B cell (primary cell): ENCODE measurements at regions of chr9 and their contacts with region 1.

Region 1: DNA sequence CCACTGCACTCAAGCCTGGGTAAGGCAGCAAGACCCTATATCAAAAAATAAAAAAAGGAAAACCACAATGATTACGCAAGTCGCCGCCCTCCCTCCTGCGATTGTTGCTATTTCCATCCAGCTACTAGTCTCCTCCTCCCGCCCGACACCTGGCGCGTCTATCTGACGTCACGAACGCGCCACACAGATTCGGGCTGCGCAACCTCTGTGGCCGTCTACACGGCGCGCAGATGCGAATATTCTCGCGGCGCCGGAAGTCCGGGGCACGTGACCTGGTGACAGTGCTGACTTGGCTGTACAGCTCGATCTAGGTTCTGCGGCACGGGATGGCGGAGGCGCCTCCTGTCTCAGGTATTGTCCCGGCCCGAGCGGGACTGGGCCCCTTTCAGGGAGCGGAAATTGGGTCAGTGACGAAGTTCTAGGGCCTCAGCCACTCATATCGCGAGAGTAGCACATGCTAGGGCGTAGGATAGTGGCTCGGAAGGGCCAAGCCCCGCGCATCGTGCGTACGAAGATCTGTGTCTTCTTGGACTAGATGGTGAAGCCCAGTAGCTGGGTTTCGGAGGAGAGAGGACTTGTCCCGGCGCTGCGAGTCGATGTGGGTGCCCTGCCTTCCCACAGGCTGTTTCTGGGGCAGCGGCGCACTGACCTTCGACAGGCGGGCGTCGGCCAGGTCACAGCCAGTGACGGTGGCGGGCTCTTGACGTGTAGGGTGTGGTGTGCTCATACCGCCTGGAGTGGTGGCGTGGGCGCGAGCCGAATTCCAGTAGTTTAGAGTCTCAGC is at the start of gene NFX1:
- DNase-seq: peak; percentile 100
- ATAC-seq: peak; percentile 82
- H3K4me3 ChIP-seq: peak within 1 kb of the TSS; percentile 80 to 98 (median 86)
- H3K4me3 Mint-ChIP-seq: peak within 1 kb of the TSS; percentile 99
- H3K27ac ChIP-seq: peak within 1 kb of the TSS; percentile 99 to 100
- H3K27ac Mint-ChIP-seq: peak within 1 kb of the TSS; percentile 100
- H3K4me1 ChIP-seq: peaks cover 43 to 58% of the 10 kb centered on the region in 2 donors
- H3K4me1 Mint-ChIP-seq: peaks cover 62% of the 10 kb centered on the region
- H3K27me3 ChIP-seq: no peaks in the 10 kb centered on the region
- H3K27me3 Mint-ChIP-seq: no peaks in the 10 kb centered on the region
- CTCF ChIP-seq: no peak
- total RNA-seq, gene NFX1: 76.3 and 81.5 TPM in 2 replicates

Region 2: GRCh38 chr9:33076358-33077004 is 214.0 kb before region 1 on chr9 and contains the start of gene SMU1:
- CTCF ChIA-PET with region 1: interaction called, 3 read pairs
- POLR2A ChIA-PET with region 1: interaction called, 3 read pairs
- intact Hi-C with region 1: loop called (anchors 10 kb)
- DNase-seq: peak; percentile 97
- ATAC-seq: peak; percentile 98
- H3K4me3 ChIP-seq: peak within 1 kb of the TSS; percentile 72 to 87 (median 84)
- H3K4me3 Mint-ChIP-seq: peak within 1 kb of the TSS; percentile 97
- H3K27ac ChIP-seq: peak within 1 kb of the TSS; percentile 91 to 95
- H3K27ac Mint-ChIP-seq: peak within 1 kb of the TSS; percentile 98
- H3K4me1 ChIP-seq: peaks cover 17 to 29% of the 10 kb centered on the region in 2 donors
- H3K4me1 Mint-ChIP-seq: peaks cover 34% of the 10 kb centered on the region
- H3K27me3 ChIP-seq: no peaks in the 10 kb centered on the region
- H3K27me3 Mint-ChIP-seq: no peaks in the 10 kb centered on the region
- CTCF ChIP-seq: no peak
- total RNA-seq, gene SMU1: 26.3 and 27.4 TPM in 2 replicates

Region 3: GRCh38 chr9:33264473-33265177 is 25.8 kb before region 1 on chr9 and contains the starts of genes BAG1 and CHMP5:
- CTCF ChIA-PET with region 1: interaction called, 3 read pairs
- POLR2A ChIA-PET with region 1: interaction called, 10 read pairs
- intact Hi-C with region 1: loop called (anchors 1 kb)
- DNase-seq: peak; percentile 99
- ATAC-seq: peak; percentile 97
- H3K4me3 ChIP-seq: peak within 1 kb of the TSS; percentile 89 to 99 (median 97)
- H3K4me3 Mint-ChIP-seq: peak within 1 kb of the TSS; percentile 88
- H3K27ac ChIP-seq: peak within 1 kb of the TSS; percentile 92 to 96
- H3K27ac Mint-ChIP-seq: peak within 1 kb of the TSS; percentile 98
- H3K4me1 ChIP-seq: peaks cover 19 to 23% of the 10 kb centered on the region in 2 donors
- H3K4me1 Mint-ChIP-seq: peaks cover 39% of the 10 kb centered on the region
- H3K27me3 ChIP-seq: no peaks in the 10 kb centered on the region
- H3K27me3 Mint-ChIP-seq: no peaks in the 10 kb centered on the region
- CTCF ChIP-seq: peak; percentile 34
- total RNA-seq, gene BAG1: 53.8 and 60.2 TPM in 2 replicates
- total RNA-seq, gene CHMP5: 28.2 and 29.7 TPM in 2 replicates

Region 4: DNA sequence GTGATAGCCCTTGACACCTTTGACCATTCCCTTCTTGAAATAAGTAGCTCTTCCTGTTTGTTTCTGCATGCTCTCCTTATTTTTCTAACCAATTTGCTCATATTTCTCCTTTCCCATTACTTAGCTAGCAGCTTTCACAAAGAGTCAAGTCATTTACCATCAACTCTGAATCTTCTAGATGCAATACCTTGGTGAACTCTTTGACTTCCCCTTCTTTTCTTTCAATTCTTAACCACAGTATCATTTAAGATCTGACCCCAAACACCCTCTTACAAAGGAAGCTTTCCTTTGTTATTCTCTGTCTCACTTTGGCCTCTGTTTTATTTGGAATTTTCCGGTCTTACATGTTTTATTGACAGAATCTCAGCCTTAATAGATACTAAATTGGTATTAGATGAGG is 13.9 kb after region 1 on chr9:
- CTCF ChIA-PET with region 1: interaction called, 26 read pairs
- POLR2A ChIA-PET with region 1: interaction called, 11 read pairs
- intact Hi-C with region 1: no loop called
- DNase-seq: no peak
- ATAC-seq: no peak
- H3K4me3 ChIP-seq: no peak overlapping the region
- H3K4me3 Mint-ChIP-seq: no peak overlapping the region
- H3K27ac ChIP-seq: peak overlapping the region in 1 of 2 donors; percentile 31
- H3K27ac Mint-ChIP-seq: no peak overlapping the region
- H3K4me1 ChIP-seq: peaks cover 2 to 10% of the 10 kb centered on the region in 2 donors
- H3K4me1 Mint-ChIP-seq: peaks cover 16% of the 10 kb centered on the region
- H3K27me3 ChIP-seq: no peaks in the 10 kb centered on the region
- H3K27me3 Mint-ChIP-seq: no peaks in the 10 kb centered on the region
- CTCF ChIP-seq: no peak

Region 5: DNA sequence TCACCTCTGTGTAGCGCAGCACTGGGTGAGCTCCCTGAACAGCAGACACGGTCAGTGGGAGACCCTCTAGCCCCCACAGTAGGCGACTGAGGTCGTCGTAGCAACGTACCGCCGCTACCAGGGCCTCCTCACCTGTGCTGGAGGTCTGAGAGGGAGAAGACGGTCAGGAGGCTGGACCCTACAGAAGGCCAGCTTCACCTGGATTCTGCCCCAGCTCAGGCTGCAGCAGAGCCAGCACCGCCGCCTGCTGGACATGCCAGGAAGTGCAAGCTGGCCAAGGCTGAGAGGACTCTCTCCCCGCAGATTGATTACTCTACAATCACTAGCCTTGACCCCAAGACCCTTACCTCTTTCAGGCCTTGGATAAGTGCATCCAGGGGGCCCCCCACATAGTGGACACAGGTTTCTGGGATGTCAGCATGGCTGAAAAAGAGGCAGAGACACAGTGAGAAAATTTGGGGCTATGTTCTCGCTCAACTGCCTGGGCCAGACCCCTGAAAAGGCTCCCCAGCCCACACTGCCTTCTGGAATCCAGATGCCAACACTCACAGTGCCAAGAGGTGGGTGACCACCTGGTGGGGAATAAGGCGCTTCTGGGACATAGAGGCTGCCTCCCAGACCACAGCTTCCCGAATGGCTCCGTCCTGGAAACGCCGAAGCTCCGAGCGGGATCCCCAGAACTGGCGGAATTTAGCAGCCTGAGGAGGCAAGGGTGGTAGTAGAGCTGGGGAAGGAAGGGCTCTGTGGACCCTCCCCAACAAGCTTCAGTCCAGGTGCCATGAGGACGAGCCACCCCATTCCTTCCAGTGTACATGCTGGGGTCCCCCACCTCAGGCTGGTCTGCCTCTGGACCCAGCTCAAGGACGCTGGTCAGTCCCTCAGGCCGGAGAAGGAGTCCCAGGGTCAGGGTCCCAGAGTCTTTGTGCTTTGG is 176.4 kb after region 1 on chr9:
- CTCF ChIA-PET with region 1: interaction called, 24 read pairs
- POLR2A ChIA-PET with region 1: no interaction called
- intact Hi-C with region 1: loop called (anchors 1 kb)
- DNase-seq: peak; percentile 64
- ATAC-seq: peak; percentile 84
- H3K4me3 ChIP-seq: no peak overlapping the region
- H3K4me3 Mint-ChIP-seq: no peak overlapping the region
- H3K27ac ChIP-seq: no peak overlapping the region
- H3K27ac Mint-ChIP-seq: no peak overlapping the region
- H3K4me1 ChIP-seq: peaks cover 0 to 4% of the 10 kb centered on the region in 2 donors
- H3K4me1 Mint-ChIP-seq: peaks cover 7% of the 10 kb centered on the region
- H3K27me3 ChIP-seq: no peaks in the 10 kb centered on the region
- H3K27me3 Mint-ChIP-seq: no peaks in the 10 kb centered on the region
- CTCF ChIP-seq: peak; percentile 95